ENCODE measurements at regions of chr15 and their contacts with region 1.

Region 1: GRCh38 chr15:75684642-75685041 is 28.0 kb downstream of the CSPG4 start:
- DNase-seq: no peak
- H3K4me3 ChIP-seq: no peak overlapping the region
- H3K27ac ChIP-seq: no peak overlapping the region
- H3K4me1 ChIP-seq: peaks cover 10% of the 10 kb centered on the region
- H3K27me3 ChIP-seq: no peaks in the 10 kb centered on the region
- CTCF ChIP-seq: no peak

Region 2: DNA sequence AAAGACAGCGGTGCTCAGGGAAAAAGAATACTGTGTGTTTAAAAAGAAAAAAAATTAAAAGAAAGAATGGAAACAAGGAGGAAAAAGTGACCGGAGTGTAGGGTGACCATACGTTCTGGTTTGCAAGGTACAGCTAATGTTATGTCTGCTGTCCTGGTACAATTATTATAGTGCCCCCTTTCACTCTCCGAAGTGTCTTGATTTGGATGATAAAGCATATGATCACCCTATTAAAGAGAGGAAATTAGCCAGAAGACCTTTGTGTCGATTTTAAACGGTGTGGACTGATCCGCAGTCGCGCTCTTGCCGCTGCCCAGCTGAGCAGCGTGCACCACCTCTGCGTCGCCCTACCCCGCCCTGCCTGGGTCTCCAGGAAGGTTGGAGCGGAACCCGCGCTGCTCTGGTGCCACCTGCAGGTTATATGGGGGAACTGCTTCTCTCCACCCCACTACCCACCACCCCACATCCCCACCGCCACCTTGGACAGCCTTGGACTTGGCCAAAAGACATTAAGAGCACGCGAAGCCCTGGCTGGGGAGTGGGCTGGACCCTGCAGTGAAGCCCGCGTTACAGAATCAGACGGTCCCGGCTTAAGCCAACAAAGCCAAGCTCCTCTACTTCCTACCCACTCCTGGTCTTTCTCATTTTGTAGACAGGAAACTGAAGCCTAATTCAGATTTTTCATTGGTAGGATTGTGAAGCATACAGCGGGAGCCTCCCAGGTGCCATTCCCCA is 117.4 kb after region 1 on chr15:
- intact Hi-C with region 1: loop called (anchors 10 kb)
- DNase-seq: peak; percentile 82
- H3K4me3 ChIP-seq: peak overlapping the region; percentile 40
- H3K27ac ChIP-seq: no peak overlapping the region
- H3K4me1 ChIP-seq: peaks cover 13% of the 10 kb centered on the region
- H3K27me3 ChIP-seq: peaks cover 61% of the 10 kb centered on the region
- CTCF ChIP-seq: peak; percentile 98

Region 3: GRCh38 chr15:75884041-75884440 is 199.4 kb after region 1 on chr15:
- intact Hi-C with region 1: no loop called
- DNase-seq: no peak
- H3K4me3 ChIP-seq: no peak overlapping the region
- H3K27ac ChIP-seq: no peak overlapping the region
- H3K4me1 ChIP-seq: no peaks in the 10 kb centered on the region
- H3K27me3 ChIP-seq: no peaks in the 10 kb centered on the region
- CTCF ChIP-seq: no peak

Measured in left ventricle myocardium inferior (tissue), 1 donor.